Prostate gland (tissue), 2 donors: ENCODE measurements at regions of chr13 and their contacts with region 1.

Region 1: GRCh38 chr13:28324181-28324789 is 170.6 kb downstream of the FLT1 start:
- DNase-seq: peak; percentile 22
- H3K4me3 ChIP-seq: no peak overlapping the region
- H3K27ac ChIP-seq: no peak overlapping the region
- H3K4me1 ChIP-seq: no peaks in the 10 kb centered on the region
- H3K27me3 ChIP-seq: no peaks in the 10 kb centered on the region
- CTCF ChIP-seq: peak in 3 of 4 experiments; percentile 47 to 52 (median 48)
- POLR2A ChIP-seq: no peak

Region 2: GRCh38 chr13:28636674-28637317 is 312.5 kb after region 1 on chr13:
- intact Hi-C with region 1: loop called (anchors 10 kb)
- DNase-seq: no peak
- H3K4me3 ChIP-seq: no peak overlapping the region
- H3K27ac ChIP-seq: no peak overlapping the region
- H3K4me1 ChIP-seq: no peaks in the 10 kb centered on the region
- H3K27me3 ChIP-seq: no peaks in the 10 kb centered on the region
- CTCF ChIP-seq: peak in 3 of 4 experiments; percentile 22 to 67 (median 53)
- POLR2A ChIP-seq: no peak